SK-N-SH (cell line): ENCODE measurements at regions of chr13 and their contacts with region 1.

Region 1: DNA sequence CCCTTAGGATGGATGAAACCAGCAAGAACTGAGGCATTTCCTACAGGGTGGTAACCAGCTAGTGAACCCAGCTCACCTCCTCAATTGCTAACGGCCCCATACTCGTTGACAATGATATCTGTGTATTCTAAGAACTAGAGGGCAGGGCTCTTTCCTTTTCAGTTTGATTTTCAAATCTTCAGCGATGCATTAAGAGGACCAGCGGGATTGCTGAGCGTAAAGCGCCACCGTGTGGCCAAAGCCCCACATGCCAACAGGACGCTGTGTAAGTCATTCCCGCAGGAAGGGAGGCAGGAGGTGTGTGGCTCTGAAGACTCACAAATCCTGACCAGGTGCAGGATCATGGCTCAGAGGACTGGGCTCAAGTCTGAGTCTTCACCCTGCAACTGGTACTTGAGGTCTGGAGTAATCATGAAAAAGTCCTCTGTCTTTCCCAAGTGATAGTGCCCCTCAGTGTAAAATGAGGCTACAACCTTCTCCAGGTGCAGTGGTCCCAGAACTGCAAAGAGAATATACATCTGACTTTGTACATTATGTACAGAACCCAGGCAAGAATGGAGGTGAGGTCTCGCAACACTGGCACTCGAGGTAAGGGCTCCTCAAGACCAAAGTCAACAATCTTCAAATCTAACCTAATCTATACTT is 40.9 kb downstream of the C13orf42 start:
- DNase-seq: peak; percentile 74
- H3K4me3 ChIP-seq: no peak overlapping the region
- H3K27ac ChIP-seq: no peak overlapping the region
- H3K4me1 ChIP-seq: peaks cover 10 to 14% of the 10 kb centered on the region in 2 experiments; a peak in 2 of 4 replicates
- H3K27me3 ChIP-seq: no peaks in the 10 kb centered on the region; the same call in 1 of the 2 replicates
- CTCF ChIP-seq: peak; percentile 94
- EP300 ChIP-seq: no peak
- RAD21 ChIP-seq: peak; percentile 100

Region 2: GRCh38 chr13:50873467-50873866 is 196.7 kb before region 1 on chr13:
- CTCF ChIA-PET with region 1: no interaction called
- POLR2A ChIA-PET with region 1: no interaction called
- DNase-seq: no peak
- H3K4me3 ChIP-seq: no peak overlapping the region
- H3K27ac ChIP-seq: no peak overlapping the region
- H3K4me1 ChIP-seq: no peaks in the 10 kb centered on the region; a peak in 1 of 4 replicates
- H3K27me3 ChIP-seq: no peaks in the 10 kb centered on the region
- CTCF ChIP-seq: no peak
- EP300 ChIP-seq: no peak
- RAD21 ChIP-seq: no peak

Region 3: DNA sequence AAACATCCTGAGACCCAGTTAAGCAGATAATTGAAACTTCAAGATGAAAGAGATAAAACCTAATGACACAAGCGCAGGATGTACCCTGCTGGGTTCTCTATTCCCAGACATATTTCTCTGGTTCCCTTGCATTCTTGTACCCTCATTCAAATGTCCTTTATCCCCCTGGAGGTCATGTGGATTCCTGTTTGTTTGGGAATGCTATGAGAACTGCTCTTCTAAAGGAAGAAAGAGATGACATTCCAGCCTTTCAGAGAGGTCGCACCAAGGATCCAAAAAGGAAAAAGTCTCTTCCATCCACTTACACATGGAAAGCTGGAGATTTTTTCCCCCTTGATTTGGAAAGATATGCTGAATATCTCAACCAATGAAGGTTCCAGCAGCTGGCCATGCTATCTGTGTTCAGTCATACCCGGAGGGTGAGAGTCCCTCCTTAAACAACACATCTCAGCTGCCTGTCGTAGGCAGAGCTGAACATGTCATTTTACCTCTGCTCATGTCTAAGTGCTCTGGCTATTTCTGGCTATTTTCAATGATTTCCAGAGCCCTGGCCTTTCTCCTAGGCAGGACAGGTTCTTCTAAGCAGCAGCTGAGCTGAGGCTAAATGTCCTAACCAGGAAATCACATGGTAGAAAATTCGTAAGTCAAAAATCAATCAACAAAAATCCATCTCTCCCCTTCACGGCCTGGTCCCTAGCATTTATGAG is 11.5 kb before region 1 on chr13:
- CTCF ChIA-PET with region 1: interaction called, 23 read pairs
- POLR2A ChIA-PET with region 1: no interaction called
- DNase-seq: peak; percentile 59
- H3K4me3 ChIP-seq: no peak overlapping the region
- H3K27ac ChIP-seq: peak overlapping the region; percentile 9 to 85; a peak in 3 of 4 replicates
- H3K4me1 ChIP-seq: peaks cover 7 to 21% of the 10 kb centered on the region in 2 experiments; a peak in 2 of 4 replicates
- H3K27me3 ChIP-seq: no peaks in the 10 kb centered on the region
- CTCF ChIP-seq: no peak
- EP300 ChIP-seq: peak in 1 of 2 experiments; percentile 65; a peak in 1 of 4 replicates
- RAD21 ChIP-seq: 0 out of 2 replicates have a peak, but pooled peaks have one; percentile 4